PC-3 (cell line): ENCODE measurements at regions of chr19 and their contacts with region 1.

Region 1: DNA sequence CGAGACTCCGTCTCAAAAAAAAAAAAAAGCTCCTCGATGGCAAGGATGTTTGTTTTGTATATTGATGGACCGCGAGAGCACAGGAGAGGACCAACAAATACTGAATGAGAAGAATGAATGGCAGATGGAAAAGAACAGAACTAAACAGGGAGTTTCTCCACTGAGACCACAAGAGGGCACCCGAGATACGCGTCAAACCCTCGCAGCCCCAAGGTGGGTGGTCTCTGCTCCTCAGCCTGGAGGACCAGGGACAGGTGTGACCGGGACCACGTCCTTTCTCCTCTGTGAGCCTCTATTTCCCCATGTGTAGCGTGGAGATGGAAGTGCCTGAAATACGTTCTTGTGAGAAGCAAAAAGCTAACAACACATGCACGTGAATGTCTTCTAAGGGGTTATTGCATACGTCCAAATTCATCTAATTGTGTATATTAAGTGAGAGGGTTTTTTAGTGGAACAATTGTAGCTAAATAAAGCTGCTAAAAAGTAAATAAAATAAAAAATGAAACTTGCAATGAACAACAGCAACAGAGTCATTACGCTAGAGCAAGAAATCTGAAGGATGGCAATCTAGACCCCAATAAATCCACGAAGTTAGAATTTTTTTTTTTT is 8.3 kb upstream of the CDC42EP5 start:
- DNase-seq: peak; percentile 60
- ATAC-seq: peak; percentile 51
- H3K4me3 ChIP-seq: no peak overlapping the region
- H3K27ac ChIP-seq: no peak overlapping the region
- H3K4me1 ChIP-seq: no peaks in the 10 kb centered on the region
- H3K27me3 ChIP-seq: peaks cover 26% of the 10 kb centered on the region
- CTCF ChIP-seq: peak; percentile 91

Region 2: DNA sequence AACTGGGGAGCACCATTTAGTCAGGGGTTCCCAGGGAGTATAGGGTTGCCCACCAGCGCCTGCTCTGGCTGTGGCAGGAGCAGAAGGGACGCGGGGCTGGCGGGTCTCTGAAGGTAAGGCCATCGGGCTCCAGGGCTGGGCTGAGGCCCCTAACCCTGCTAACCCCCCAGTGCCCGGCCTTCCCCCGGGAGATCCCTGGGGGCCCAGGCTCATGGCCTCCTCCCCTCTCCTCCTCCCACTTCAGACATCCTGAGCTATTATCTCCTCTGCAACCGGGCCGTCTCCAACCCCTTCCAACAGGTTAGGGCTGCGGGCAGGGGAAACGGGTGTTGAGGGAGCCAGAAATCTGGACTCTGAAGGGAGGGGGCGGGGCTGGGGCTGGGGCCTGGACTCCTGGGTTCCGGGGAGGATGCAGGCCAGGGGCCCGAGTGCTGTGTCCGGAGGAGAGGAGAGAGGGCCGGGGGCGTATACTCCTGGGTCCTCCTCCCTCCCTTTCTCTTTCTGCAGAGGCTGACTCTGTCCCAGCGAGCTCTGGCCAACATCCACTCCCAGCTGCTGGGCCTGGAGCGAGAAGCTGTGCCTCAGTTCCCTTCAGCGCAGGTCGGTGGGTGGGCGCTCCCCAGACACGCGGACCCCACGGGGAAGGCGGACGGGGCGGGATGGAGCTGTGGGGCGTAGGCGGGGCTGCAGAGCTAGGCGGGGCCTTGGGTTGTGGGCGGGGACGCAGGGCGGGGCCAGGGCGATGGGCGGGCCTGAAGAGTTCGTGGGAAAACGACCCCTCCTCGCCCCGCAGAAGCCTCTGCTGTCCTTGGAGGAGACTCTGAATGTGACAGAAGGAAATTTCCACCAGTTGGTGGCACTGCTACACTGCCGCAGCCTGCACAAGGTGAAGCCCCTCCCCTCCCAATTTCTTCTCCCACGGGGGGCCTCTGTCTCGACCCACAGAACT is 50.8 kb before region 1 on chr19:
- CTCF ChIA-PET with region 1: interaction called, 15 read pairs
- POLR2A ChIA-PET with region 1: no interaction called
- intact Hi-C with region 1: no loop called
- DNase-seq: peak; percentile 74
- ATAC-seq: peak; percentile 55
- H3K4me3 ChIP-seq: peak overlapping the region; percentile 66
- H3K27ac ChIP-seq: peak overlapping the region; percentile 89
- H3K4me1 ChIP-seq: peaks cover 34% of the 10 kb centered on the region
- H3K27me3 ChIP-seq: no peaks in the 10 kb centered on the region
- CTCF ChIP-seq: peak; percentile 53

Region 3: DNA sequence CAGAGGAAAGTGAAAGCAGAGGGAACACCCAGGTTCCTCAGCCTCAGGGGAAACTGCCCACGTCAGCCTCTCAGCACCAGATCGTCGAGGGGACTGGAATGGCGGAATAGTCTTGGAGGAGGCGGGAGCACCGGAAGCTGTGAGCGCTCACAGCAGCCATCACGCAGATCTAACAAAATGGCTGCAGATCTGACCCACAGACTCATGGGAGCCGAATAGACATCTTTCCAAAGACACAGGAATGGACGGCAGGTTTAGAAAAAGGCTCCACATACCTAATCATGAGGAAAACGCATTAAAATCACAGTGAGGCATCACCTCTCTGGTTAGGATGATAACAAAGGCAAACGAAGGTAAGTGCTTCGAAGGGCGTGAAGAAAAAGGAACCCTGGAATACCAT is 80.4 kb after region 1 on chr19:
- CTCF ChIA-PET with region 1: no interaction called
- POLR2A ChIA-PET with region 1: no interaction called
- intact Hi-C with region 1: loop called (anchors 10 kb)
- DNase-seq: no peak
- ATAC-seq: no peak
- H3K4me3 ChIP-seq: peak overlapping the region; percentile 50
- H3K27ac ChIP-seq: no peak overlapping the region
- H3K4me1 ChIP-seq: no peaks in the 10 kb centered on the region; the same call in 1 of the 2 replicates
- H3K27me3 ChIP-seq: peaks cover 57% of the 10 kb centered on the region
- CTCF ChIP-seq: no peak

Region 4: GRCh38 chr19:54674021-54674617 is 192.7 kb after region 1 on chr19:
- CTCF ChIA-PET with region 1: interaction called, 9 read pairs
- POLR2A ChIA-PET with region 1: no interaction called
- intact Hi-C with region 1: loop called (anchors 1 kb)
- DNase-seq: peak; percentile 75
- ATAC-seq: no peak
- H3K4me3 ChIP-seq: no peak overlapping the region
- H3K27ac ChIP-seq: no peak overlapping the region
- H3K4me1 ChIP-seq: no peaks in the 10 kb centered on the region
- H3K27me3 ChIP-seq: peaks cover 46% of the 10 kb centered on the region
- CTCF ChIP-seq: peak; percentile 93